ENCODE measurements at regions of chr1 and their contacts with region 1.

Region 1: GRCh38 chr1:97243973-97244560 is 522.5 kb downstream of the PTBP2 start:
- DNase-seq: no peak
- ATAC-seq: no peak

Region 2: GRCh38 chr1:97350662-97351061 is 106.6 kb after region 1 on chr1:
- intact Hi-C with region 1: no loop called
- DNase-seq: no peak
- ATAC-seq: no peak

Region 3: GRCh38 chr1:97529600-97529999 is 285.5 kb after region 1 on chr1:
- intact Hi-C with region 1: loop called (anchors 5 kb)
- DNase-seq: no peak
- ATAC-seq: no peak

Region 4: DNA sequence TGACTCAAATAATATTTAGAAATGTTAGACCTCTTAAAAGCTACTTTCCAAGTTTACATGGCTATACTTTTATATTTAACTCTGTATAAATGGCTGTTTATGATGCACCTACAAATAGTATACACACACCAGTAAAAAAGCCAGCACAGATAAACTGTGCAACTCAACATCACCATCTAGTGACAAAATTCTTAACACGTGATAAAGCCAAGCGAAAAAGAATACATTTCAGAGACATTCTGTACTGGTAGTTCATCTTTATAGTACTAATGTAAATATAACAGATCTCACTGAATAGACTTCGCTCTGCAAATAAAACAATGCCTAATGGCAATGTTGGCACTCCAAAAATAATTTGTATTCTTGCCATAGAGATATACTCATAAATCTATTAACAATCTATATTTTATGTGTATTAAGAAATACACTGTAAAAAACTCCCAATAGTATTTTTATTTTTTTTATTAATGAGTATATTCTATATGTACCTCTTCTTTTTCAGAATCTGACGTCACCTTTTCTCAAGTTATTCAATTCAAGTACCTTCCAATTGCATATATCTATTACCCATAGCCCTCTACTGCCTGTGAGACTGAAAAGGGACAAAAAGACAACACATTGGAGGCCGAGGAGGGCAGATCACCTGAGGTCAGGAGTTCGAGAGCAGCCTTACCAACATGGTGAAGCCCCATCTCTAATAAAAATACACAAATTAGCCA is 576.6 kb after region 1 on chr1:
- intact Hi-C with region 1: loop called (anchors 5 kb)
- DNase-seq: no peak
- ATAC-seq: no peak

Measured in Right ventricle myocardium inferior (tissue), 1 donor.